ENCODE measurements at regions of chrX and their contacts with region 1.

Region 1: DNA sequence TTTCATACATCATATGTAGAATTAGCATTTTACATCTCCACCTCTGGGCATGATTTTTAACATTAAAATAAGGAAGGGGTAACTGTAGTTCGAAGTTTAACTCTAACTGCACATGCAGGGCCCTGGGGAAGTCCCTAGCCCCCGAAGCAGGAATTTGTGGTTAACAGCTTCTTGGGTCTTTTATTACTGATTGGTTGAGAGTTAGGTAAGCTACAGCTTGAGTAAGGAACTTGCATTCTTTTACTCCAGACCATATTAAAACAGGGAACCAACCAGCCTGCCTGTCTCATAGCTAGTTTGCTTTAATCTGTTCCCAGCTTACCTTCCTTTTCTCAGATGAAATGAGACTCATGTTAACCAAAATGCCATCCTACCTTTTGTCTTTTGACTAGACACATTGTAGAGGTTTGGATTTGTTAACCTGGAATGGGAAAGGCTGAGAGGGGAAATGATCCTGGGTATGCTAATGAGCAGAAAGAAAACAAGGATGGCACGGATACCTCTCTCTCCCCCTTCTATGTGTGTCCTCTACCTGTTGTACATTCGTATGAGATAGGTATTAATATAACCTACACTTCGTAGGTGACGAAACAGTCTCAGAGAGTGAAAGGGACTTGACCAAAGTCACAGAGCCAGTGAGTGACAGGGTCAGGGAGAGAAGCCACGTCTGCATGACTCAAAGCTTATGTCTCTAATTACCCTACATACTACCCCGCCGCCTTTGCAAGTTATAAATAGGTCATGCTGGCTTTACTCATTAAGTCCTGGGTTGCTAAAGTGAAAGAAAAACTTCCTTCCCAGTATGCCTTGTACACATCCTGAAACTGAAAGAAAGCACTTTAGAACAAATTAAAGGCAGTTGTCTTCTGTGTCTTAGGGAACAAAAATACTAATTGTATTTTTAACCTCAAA is 119.5 kb upstream of the AFF2 start:
- DNase-seq: peak; percentile 67
- H3K4me3 Mint-ChIP-seq: peak overlapping the region; percentile 54
- H3K27ac Mint-ChIP-seq: peak overlapping the region; percentile 93
- H3K4me1 Mint-ChIP-seq: peaks cover 30% of the 10 kb centered on the region
- H3K27me3 Mint-ChIP-seq: no peaks in the 10 kb centered on the region

Region 2: GRCh38 chrX:147899715-147900114 is 481.2 kb before region 1 on chrX:
- CTCF ChIA-PET with region 1: no interaction called
- intact Hi-C with region 1: no loop called
- DNase-seq: no peak
- H3K4me3 Mint-ChIP-seq: no peak overlapping the region
- H3K27ac Mint-ChIP-seq: no peak overlapping the region
- H3K4me1 Mint-ChIP-seq: peaks cover 3% of the 10 kb centered on the region
- H3K27me3 Mint-ChIP-seq: peaks cover 1% of the 10 kb centered on the region

Region 3: DNA sequence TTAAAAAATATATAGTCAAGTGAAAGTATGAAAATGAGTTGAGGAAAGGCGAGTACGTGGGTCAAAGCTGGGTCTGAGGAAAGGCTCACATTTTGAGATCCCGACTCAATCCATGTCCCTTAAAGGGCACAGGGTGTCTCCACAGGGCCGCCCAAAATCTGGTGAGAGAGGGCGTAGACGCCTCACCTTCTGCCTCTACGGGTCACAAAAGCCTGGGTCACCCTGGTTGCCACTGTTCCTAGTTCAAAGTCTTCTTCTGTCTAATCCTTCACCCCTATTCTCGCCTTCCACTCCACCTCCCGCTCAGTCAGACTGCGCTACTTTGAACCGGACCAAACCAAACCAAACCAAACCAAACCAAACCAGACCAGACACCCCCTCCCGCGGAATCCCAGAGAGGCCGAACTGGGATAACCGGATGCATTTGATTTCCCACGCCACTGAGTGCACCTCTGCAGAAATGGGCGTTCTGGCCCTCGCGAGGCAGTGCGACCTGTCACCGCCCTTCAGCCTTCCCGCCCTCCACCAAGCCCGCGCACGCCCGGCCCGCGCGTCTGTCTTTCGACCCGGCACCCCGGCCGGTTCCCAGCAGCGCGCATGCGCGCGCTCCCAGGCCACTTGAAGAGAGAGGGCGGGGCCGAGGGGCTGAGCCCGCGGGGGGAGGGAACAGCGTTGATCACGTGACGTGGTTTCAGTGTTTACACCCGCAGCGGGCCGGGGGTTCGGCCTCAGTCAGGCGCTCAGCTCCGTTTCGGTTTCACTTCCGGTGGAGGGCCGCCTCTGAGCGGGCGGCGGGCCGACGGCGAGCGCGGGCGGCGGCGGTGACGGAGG is 469.5 kb before region 1 on chrX and contains the start of gene FMR1:
- CTCF ChIA-PET with region 1: no interaction called
- intact Hi-C with region 1: loop called (anchors 1 kb)
- DNase-seq: peak; percentile 94
- H3K4me3 Mint-ChIP-seq: peak within 1 kb of the TSS; percentile 93
- H3K27ac Mint-ChIP-seq: peak within 1 kb of the TSS; percentile 94
- H3K4me1 Mint-ChIP-seq: peaks cover 24% of the 10 kb centered on the region
- H3K27me3 Mint-ChIP-seq: no peaks in the 10 kb centered on the region
- total RNA-seq, gene FMR1: 24.5 to 25.7 TPM

Region 4: DNA sequence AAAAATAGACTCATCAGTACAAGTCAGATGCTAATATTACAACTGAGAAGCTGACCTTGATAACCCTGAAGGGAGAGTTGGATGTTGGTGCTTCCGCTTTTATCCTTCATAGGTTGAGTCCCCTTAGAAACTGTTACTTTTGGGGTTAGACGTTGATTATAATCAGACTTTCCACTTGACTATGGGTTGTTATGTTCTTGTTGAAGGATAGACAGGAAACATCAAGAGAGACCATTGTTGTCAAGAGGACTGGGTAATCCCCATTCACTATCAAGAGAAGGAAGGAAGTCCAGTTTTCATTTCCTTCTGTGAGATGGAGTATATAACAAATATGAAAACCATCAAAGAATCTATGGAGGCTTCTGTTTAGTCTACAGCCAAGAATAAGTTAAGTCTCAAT is 110.4 kb before region 1 on chrX:
- CTCF ChIA-PET with region 1: no interaction called
- intact Hi-C with region 1: loop called (anchors 1 kb)
- DNase-seq: no peak
- H3K4me3 Mint-ChIP-seq: no peak overlapping the region
- H3K27ac Mint-ChIP-seq: no peak overlapping the region
- H3K4me1 Mint-ChIP-seq: peaks cover 37% of the 10 kb centered on the region
- H3K27me3 Mint-ChIP-seq: no peaks in the 10 kb centered on the region

Region 5: DNA sequence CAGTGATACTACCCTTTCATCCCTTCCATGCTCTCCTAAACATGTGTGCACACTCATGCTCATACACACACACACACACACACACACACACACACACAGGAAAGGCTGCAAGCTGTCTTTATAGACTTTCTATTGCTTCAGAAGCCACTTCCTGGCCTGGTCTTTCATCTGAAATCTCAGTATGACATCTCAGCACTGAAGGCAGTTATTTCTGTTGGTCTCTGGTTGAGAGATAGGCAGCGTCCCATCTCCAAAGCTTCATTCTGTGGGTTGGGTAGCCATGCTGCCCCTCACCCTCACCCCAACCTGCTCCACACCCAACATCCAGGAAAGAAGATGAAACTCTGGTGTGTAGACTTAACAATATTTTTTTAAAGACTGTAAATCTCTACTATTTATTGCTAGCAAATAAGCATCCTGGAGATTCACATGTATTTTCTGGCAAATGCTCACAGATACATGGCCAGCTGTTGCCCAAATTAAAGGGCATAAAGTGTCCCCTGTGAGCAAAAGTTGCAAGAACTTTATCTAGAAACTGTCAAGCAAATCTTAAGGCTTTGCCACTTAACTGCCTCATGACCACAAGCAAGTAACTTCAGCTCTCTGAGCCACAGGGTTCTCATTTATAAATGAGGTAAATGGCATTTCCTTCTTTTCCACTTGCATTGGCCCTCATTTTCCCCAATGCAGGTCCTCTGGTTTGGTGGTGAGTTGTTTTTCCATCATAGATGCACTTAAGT is 70.3 kb before region 1 on chrX:
- CTCF ChIA-PET with region 1: no interaction called
- intact Hi-C with region 1: loop called (anchors 2 kb)
- DNase-seq: peak; percentile 76
- H3K4me3 Mint-ChIP-seq: no peak overlapping the region
- H3K27ac Mint-ChIP-seq: peak overlapping the region; percentile 53
- H3K4me1 Mint-ChIP-seq: peaks cover 29% of the 10 kb centered on the region
- H3K27me3 Mint-ChIP-seq: no peaks in the 10 kb centered on the region

Region 6: GRCh38 chrX:148412006-148412405 is 31.1 kb after region 1 on chrX:
- CTCF ChIA-PET with region 1: no interaction called
- intact Hi-C with region 1: loop called (anchors 1 kb)
- DNase-seq: no peak
- H3K4me3 Mint-ChIP-seq: no peak overlapping the region
- H3K27ac Mint-ChIP-seq: no peak overlapping the region
- H3K4me1 Mint-ChIP-seq: peaks cover 10% of the 10 kb centered on the region
- H3K27me3 Mint-ChIP-seq: no peaks in the 10 kb centered on the region

Region 7: DNA sequence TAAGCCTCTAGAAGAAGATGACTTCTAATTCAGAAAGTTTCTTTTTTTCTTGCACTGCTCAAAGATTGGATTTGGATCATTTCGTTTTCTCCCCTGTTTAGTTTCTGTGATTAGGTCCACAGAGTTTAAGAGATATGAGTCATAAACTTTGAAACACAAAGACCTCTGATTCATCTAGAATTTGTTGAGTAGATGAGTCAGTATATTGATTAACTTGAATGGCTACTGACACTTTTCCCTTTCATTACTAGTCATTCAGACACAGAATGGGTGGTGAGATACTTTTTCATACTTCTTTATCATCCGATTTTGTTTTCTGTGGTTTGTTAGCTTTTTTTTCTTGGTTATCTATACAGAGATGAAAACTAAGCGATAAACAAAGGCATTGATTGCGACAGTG is 85.4 kb after region 1 on chrX:
- CTCF ChIA-PET with region 1: no interaction called
- intact Hi-C with region 1: loop called (anchors 1 kb)
- DNase-seq: no peak
- H3K4me3 Mint-ChIP-seq: no peak overlapping the region
- H3K27ac Mint-ChIP-seq: no peak overlapping the region
- H3K4me1 Mint-ChIP-seq: peaks cover 14% of the 10 kb centered on the region
- H3K27me3 Mint-ChIP-seq: no peaks in the 10 kb centered on the region

Region 8: GRCh38 chrX:148541544-148541983 is 160.7 kb after region 1 on chrX:
- CTCF ChIA-PET with region 1: no interaction called
- intact Hi-C with region 1: no loop called
- DNase-seq: no peak
- H3K4me3 Mint-ChIP-seq: no peak overlapping the region
- H3K27ac Mint-ChIP-seq: no peak overlapping the region
- H3K4me1 Mint-ChIP-seq: peaks cover 3% of the 10 kb centered on the region
- H3K27me3 Mint-ChIP-seq: no peaks in the 10 kb centered on the region

Region 9: DNA sequence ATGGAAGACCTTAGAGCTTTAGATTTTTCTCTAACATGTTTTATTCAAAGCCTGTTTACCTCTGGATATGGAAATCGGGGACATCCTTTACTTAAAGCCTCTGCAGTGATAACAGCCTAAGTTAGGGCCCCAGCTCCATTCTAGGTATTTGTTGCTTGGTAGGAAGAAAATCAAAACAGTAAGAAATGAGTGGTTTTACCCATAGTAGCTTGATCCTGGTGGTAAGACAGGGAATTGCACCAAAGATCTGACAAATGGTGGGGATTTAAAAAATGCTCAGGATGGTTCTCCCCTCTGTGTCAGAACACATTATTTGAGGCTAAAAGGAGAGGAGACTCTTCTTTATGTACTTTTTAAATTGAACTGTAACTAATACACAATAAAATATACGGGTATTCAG is 171.9 kb after region 1 on chrX:
- CTCF ChIA-PET with region 1: no interaction called
- intact Hi-C with region 1: no loop called
- DNase-seq: no peak
- H3K4me3 Mint-ChIP-seq: no peak overlapping the region
- H3K27ac Mint-ChIP-seq: no peak overlapping the region
- H3K4me1 Mint-ChIP-seq: peaks cover 4% of the 10 kb centered on the region
- H3K27me3 Mint-ChIP-seq: no peaks in the 10 kb centered on the region

Region 10: DNA sequence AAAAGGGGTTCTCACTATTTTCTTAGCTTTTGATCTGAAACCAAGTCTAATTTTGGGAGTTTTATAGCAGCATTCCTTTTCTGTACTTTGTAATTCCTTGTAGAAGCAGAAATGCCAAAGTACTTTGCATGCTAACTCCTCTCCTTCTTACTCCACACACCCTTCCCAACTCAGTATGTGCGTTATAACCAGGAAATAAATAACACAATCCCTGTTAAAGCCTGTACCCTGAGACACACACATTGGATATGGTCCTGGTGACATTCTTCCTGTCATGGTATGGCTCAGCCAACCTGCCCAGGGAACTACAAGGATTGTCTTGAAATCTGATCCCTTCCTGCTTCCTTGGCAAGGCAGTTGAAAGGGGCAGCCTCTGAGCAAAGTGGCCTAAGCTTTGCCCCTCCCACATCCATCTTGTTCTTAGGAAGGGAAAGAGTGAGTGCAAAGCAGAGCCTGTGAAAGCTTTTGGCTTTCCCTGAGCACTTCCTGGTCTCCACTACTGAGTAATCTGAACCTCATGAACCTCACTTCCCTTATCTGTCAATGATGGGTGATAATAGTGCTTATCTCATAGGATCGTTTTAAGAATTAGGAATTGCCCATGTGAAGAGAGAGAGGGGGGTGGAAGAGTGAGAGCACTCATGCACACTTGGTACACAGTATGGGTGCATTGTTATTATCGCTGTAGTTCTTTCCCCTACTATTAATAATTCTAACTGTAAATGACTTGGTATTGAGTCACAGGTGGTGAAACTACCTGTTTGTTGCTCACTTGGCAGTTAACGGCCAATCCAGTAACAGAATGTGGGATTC is 228.8 kb after region 1 on chrX:
- CTCF ChIA-PET with region 1: no interaction called
- intact Hi-C with region 1: loop called (anchors 2 kb)
- DNase-seq: peak; percentile 4
- H3K4me3 Mint-ChIP-seq: peak overlapping the region; percentile 4
- H3K27ac Mint-ChIP-seq: no peak overlapping the region
- H3K4me1 Mint-ChIP-seq: peaks cover 27% of the 10 kb centered on the region
- H3K27me3 Mint-ChIP-seq: no peaks in the 10 kb centered on the region

Measured in activated naive CD4-positive, alpha-beta T cell treated with anti-CD3 and anti-CD28 coated beads for 36 hours (primary cell).